SK-N-SH (cell line): ENCODE measurements at regions of chr1 and their contacts with region 1.

Region 1: GRCh38 chr1:224700915-224701531 is 84.9 kb downstream of the CNIH3 start:
- DNase-seq: peak; percentile 44
- H3K4me3 ChIP-seq: no peak overlapping the region
- H3K27ac ChIP-seq: no peak overlapping the region
- H3K4me1 ChIP-seq: no peaks in the 10 kb centered on the region; a peak in 1 of 4 replicates
- H3K27me3 ChIP-seq: no peaks in the 10 kb centered on the region
- CTCF ChIP-seq: peak; percentile 55
- EP300 ChIP-seq: no peak
- RAD21 ChIP-seq: peak; percentile 50

Region 2: DNA sequence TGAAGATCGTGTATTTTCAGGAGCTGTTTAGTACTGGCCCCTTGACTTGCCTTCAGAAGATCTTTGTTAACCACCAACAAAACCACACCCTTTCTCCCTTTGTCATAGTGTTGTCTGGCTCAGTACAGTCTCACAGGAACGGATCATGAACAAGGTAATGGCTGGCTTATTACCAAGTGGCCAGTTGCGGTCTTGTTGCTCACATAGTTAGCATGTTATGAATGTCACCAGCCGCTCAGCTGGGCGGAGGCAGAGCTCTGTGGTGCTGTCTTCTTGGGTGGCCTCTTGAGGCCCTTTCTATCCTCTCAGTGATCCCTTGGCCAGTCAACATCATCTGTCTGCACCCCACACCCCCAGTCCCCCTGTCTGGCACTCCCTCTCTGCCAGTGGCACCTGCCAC is 63.5 kb before region 1 on chr1:
- CTCF ChIA-PET with region 1: no interaction called
- POLR2A ChIA-PET with region 1: no interaction called
- DNase-seq: no peak
- H3K4me3 ChIP-seq: no peak overlapping the region
- H3K27ac ChIP-seq: peak overlapping the region; percentile 17 to 37; a peak in 3 of 4 replicates
- H3K4me1 ChIP-seq: peaks cover 4 to 49% of the 10 kb centered on the region in 2 experiments; a peak in 3 of 4 replicates
- H3K27me3 ChIP-seq: no peaks in the 10 kb centered on the region
- CTCF ChIP-seq: no peak
- EP300 ChIP-seq: no peak
- RAD21 ChIP-seq: no peak

Region 3: DNA sequence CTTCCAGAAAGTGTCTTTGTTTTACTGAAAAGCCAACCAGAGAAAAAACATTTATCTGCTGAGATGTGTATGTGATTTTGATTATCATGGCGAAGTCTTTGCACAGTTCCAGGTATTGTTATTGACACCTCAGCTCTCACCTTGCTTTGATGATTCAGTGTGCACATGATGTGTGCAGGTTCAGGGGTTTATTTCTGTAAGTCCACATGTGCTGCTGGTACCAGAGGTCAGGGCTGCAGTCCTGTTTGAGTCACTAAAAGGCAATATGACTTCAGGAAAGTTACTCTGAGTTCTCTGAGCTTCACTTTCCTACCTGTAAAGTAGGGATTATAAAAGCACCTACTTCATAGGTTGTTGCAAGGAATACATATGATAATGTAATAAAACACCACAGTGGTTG is 12.2 kb after region 1 on chr1:
- CTCF ChIA-PET with region 1: interaction called, 13 read pairs
- POLR2A ChIA-PET with region 1: no interaction called
- DNase-seq: no peak
- H3K4me3 ChIP-seq: no peak overlapping the region
- H3K27ac ChIP-seq: no peak overlapping the region
- H3K4me1 ChIP-seq: peaks cover 0 to 7% of the 10 kb centered on the region in 2 experiments; a peak in 1 of 4 replicates
- H3K27me3 ChIP-seq: no peaks in the 10 kb centered on the region
- CTCF ChIP-seq: no peak
- EP300 ChIP-seq: no peak
- RAD21 ChIP-seq: no peak